ENCODE measurements at regions of chr2 and their contacts with region 1.

Region 1: GRCh38 chr2:118221666-118222594 is 133.7 kb downstream of the INSIG2 start:
- DNase-seq: no peak
- ATAC-seq: peak; percentile 61
- H3K4me3 Mint-ChIP-seq: no peak overlapping the region
- H3K27ac Mint-ChIP-seq: no peak overlapping the region
- H3K4me1 Mint-ChIP-seq: peaks cover 30% of the 10 kb centered on the region
- H3K27me3 Mint-ChIP-seq: peaks cover 42% of the 10 kb centered on the region
- CTCF ChIP-seq: peak; percentile 74

Region 2: DNA sequence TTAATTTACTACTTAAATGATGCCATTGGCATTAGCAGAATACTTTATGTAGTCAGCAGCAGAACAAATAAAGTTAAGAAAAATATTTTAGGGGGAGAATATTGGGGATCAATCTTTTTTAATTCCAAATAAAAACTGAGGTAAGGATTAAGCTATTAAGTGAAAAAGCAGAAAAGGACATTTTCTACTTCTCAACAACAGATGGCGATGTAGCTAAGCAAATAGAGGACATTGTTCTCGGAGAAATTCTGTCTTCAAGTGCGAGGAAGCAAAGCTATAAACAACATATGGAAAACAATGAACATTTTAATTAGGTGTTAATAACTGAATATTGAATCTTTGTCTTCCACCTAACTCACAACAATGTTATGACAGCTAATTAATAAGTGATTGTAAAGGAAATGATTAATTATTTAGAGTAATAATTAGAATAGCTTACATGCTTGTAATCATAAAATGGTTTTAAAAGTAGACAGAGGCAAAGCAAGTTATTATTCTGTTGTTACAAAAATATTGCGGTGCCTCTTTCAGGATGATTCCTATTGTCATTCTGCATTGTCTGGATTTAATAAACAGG is 175.2 kb before region 1 on chr2:
- CTCF ChIA-PET with region 1: interaction called, 12 read pairs
- POLR2A ChIA-PET with region 1: no interaction called
- intact Hi-C with region 1: no loop called
- DNase-seq: no peak
- ATAC-seq: peak; percentile 25
- H3K4me3 Mint-ChIP-seq: no peak overlapping the region
- H3K27ac Mint-ChIP-seq: no peak overlapping the region
- H3K4me1 Mint-ChIP-seq: peaks cover 10% of the 10 kb centered on the region
- H3K27me3 Mint-ChIP-seq: peaks cover 27% of the 10 kb centered on the region
- CTCF ChIP-seq: no peak

Region 3: GRCh38 chr2:118186110-118186857 is 35.6 kb before region 1 on chr2:
- CTCF ChIA-PET with region 1: interaction called, 4 read pairs
- POLR2A ChIA-PET with region 1: interaction called, 13 read pairs
- intact Hi-C with region 1: loop called (anchors 1 kb)
- DNase-seq: peak; percentile 81
- ATAC-seq: peak; percentile 95
- H3K4me3 Mint-ChIP-seq: peak overlapping the region; percentile 97
- H3K27ac Mint-ChIP-seq: peak overlapping the region; percentile 98
- H3K4me1 Mint-ChIP-seq: peaks cover 16% of the 10 kb centered on the region
- H3K27me3 Mint-ChIP-seq: peaks cover under 1% of the 10 kb centered on the region
- CTCF ChIP-seq: no peak

Region 4: DNA sequence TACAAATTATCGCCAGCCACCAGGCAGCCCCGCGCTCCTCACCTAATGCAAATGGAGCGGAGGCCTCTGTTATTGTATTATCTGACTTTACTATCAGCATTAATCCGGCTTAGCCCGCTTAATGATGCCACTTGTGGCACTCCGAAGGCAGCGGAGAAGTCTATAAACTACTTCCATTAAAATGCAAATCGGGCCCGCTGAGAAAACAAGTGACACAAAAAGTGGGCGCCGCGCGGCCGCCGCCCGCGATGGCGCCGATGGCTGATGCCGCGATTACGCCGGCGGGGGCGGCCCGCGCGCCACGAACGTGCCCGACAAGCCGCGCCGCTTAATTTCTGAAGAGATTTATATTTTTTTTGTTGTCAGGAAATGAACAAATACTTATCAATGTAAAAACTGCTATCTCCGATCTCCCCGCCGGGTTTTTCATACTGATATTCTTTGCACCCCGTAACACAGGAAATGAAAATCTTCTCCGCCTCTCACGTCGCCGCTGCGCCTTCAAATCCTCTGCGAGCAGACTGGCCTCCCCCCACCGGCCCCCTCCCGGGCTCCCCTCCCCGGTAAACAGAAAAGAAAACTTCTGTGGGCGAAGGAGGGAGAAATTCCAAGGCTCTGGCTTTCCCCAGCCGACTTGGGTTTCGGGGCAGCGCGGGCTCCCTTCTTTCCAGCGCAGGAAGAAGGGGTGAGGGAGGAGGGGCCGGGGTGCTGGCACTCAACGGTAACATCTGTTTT is 88.2 kb after region 1 on chr2:
- CTCF ChIA-PET with region 1: no interaction called
- POLR2A ChIA-PET with region 1: no interaction called
- intact Hi-C with region 1: loop called (anchors 1 kb)
- DNase-seq: peak; percentile 23
- ATAC-seq: peak; percentile 52
- H3K4me3 Mint-ChIP-seq: peak overlapping the region; percentile 83
- H3K27ac Mint-ChIP-seq: peak overlapping the region; percentile 70
- H3K4me1 Mint-ChIP-seq: peaks cover 2% of the 10 kb centered on the region
- H3K27me3 Mint-ChIP-seq: peaks cover 42% of the 10 kb centered on the region
- CTCF ChIP-seq: no peak

Region 5: DNA sequence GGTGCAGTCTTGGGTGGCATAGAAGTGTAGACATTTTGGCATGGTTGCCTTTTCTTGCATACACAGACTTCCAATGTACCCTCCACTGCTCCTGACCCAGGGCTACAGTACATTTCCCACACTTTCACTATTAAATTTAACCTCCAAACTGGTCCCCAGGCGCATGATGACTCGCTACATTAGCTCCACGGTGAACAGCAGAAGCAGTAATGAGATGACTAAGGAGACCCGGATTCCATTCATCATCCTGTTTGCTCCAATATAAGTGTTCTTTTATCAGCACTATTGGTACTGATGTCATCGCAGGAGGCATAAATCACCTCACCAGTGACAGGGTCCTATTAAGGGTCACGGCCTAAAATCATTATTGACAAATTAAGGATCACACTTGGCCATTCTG is 309.0 kb after region 1 on chr2:
- CTCF ChIA-PET with region 1: no interaction called
- POLR2A ChIA-PET with region 1: no interaction called
- intact Hi-C with region 1: no loop called
- DNase-seq: no peak
- ATAC-seq: no peak
- H3K4me3 Mint-ChIP-seq: no peak overlapping the region
- H3K27ac Mint-ChIP-seq: no peak overlapping the region
- H3K4me1 Mint-ChIP-seq: no peaks in the 10 kb centered on the region
- H3K27me3 Mint-ChIP-seq: no peaks in the 10 kb centered on the region
- CTCF ChIP-seq: no peak

Region 6: DNA sequence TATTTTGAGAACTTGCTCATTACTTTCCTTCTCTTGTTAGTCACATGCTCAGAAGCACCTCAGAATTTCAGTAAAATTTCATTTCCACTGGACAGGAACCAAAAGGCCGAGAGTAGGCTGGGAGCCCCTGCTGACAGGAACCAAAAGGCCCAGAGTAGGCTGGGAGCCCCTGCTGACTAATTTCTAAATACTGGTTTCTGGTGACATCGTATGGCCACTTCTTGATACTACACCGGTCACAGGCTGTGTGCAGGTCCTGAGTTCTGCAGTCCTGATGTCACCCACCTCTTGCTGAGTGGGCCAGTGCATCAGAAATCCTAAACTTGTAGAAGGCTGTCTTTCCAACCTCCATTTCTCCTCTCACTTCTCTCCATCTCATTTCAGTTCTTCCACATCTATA is 643.2 kb after region 1 on chr2:
- CTCF ChIA-PET with region 1: interaction called, 5 read pairs
- POLR2A ChIA-PET with region 1: no interaction called
- intact Hi-C with region 1: loop called (anchors 1 kb)
- DNase-seq: no peak
- ATAC-seq: peak; percentile 77
- H3K4me3 Mint-ChIP-seq: no peak overlapping the region
- H3K27ac Mint-ChIP-seq: no peak overlapping the region
- H3K4me1 Mint-ChIP-seq: no peaks in the 10 kb centered on the region
- H3K27me3 Mint-ChIP-seq: peaks cover 34% of the 10 kb centered on the region
- CTCF ChIP-seq: no peak

Region 7: GRCh38 chr2:119290859-119291587 is 1069.1 kb after region 1 on chr2:
- CTCF ChIA-PET with region 1: no interaction called
- POLR2A ChIA-PET with region 1: no interaction called
- intact Hi-C with region 1: loop called (anchors 2 kb)
- DNase-seq: peak; percentile 37
- ATAC-seq: peak; percentile 75
- H3K4me3 Mint-ChIP-seq: no peak overlapping the region
- H3K27ac Mint-ChIP-seq: no peak overlapping the region
- H3K4me1 Mint-ChIP-seq: peaks cover 3% of the 10 kb centered on the region
- H3K27me3 Mint-ChIP-seq: no peaks in the 10 kb centered on the region
- CTCF ChIP-seq: peak; percentile 30

Region 8: GRCh38 chr2:119678998-119679710 is 1457.2 kb after region 1 on chr2 and contains the start of gene TMEM177:
- CTCF ChIA-PET with region 1: no interaction called
- POLR2A ChIA-PET with region 1: no interaction called
- intact Hi-C with region 1: loop called (anchors 5 kb)
- DNase-seq: peak; percentile 90
- ATAC-seq: peak; percentile 96
- H3K4me3 Mint-ChIP-seq: peak within 1 kb of the TSS; percentile 90
- H3K27ac Mint-ChIP-seq: peak within 1 kb of the TSS; percentile 68
- H3K4me1 Mint-ChIP-seq: peaks cover 23% of the 10 kb centered on the region
- H3K27me3 Mint-ChIP-seq: no peaks in the 10 kb centered on the region
- CTCF ChIP-seq: no peak
- total RNA-seq, gene TMEM177: 9.0 and 10.3 TPM in 2 replicates